Common myeloid progenitor, CD34-positive (primary cell): ENCODE measurements at regions of chr14 and their contacts with region 1.

Region 1: DNA sequence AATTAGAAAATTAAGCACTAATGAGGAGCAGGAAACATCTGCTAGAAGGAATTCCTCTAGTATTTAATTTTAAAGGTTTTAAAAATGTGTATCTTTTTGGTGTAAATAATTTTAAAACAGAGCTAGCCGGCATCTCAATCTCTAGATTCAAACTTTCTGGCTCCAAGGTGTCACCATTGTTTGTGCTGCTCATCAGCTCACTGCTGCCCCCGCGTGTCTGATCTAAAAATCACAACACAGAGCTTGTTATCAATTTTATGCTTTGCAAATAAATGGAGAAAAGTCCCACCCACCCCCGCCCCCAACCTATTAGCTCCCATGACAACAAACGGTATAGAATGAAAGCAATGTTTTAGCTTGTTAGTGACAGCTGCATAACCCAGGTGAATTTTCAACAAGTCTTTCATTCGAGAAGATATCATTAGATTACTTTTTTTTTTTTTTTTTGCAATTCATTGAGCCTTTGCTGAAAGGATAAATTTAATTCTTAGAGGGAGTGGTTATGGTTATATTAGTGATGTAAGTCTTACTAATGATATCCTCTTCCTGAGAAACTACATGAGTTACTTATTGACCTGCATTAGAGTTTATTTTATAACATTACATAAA is 11.3 kb upstream of the ABHD12B start:
- DNase-seq: peak; percentile 91 to 93 (median 92)
- H3K4me3 ChIP-seq: peak overlapping the region in 6 of 7 experiments; percentile 65 to 92 (median 79)
- H3K27ac ChIP-seq: peak overlapping the region; percentile 13 to 66
- H3K4me1 ChIP-seq: peaks cover 4 to 32% (median 32%) of the 10 kb centered on the region in 4 experiments
- H3K27me3 ChIP-seq: no peaks in the 10 kb centered on the region

Region 2: GRCh38 chr14:50773632-50774541 is 86.7 kb before region 1 on chr14:
- CTCF ChIA-PET with region 1: interaction called, 131 read pairs
- POLR2A ChIA-PET with region 1: interaction called, 3 read pairs
- DNase-seq: peak in 2 of 3 donors; percentile 22 to 33
- H3K4me3 ChIP-seq: no peak overlapping the region
- H3K27ac ChIP-seq: no peak overlapping the region
- H3K4me1 ChIP-seq: peaks cover 1 to 11% (median 6%) of the 10 kb centered on the region in 4 experiments
- H3K27me3 ChIP-seq: no peaks in the 10 kb centered on the region

Region 3: DNA sequence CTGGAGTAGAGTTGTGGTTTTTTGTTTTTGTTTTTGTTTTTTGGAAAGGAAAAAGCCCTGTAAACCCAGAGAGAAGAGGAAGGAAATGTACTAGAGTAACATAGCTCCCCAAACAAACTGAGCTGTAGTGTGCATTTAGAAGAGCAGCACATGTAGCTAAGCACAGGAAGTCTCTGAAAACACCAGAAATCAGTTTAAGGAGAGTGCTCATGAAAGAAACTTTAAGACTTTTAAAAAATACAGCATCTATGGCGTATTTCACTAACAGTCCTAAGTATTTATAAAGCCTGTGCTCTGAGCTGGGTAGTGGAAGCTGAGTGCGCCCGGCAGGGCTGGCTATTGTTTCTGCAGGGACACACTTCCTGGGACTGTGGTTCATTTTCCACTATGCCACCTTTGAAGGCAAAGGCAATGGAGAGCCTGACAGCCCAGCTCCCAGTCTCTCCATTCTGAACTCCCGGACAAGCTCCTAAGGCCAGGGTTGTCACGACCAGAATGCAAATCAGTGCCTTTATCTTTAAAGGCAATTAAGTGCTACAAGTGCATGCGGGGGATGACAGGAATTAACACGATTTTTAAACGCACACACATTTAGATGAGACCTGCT is 75.0 kb before region 1 on chr14:
- CTCF ChIA-PET with region 1: interaction called, 54 read pairs
- POLR2A ChIA-PET with region 1: interaction called, 3 read pairs
- DNase-seq: peak in 2 of 3 donors; percentile 30 to 43
- H3K4me3 ChIP-seq: peak overlapping the region in 4 of 7 experiments; percentile 26 to 37 (median 34)
- H3K27ac ChIP-seq: no peak overlapping the region
- H3K4me1 ChIP-seq: peaks cover 17 to 40% (median 24%) of the 10 kb centered on the region in 4 experiments
- H3K27me3 ChIP-seq: no peaks in the 10 kb centered on the region

Region 4: GRCh38 chr14:50792051-50792477 is 68.5 kb before region 1 on chr14:
- CTCF ChIA-PET with region 1: interaction called, 54 read pairs
- POLR2A ChIA-PET with region 1: interaction called, 3 read pairs
- DNase-seq: peak in 1 of 3 donors; percentile 25
- H3K4me3 ChIP-seq: no peak overlapping the region
- H3K27ac ChIP-seq: no peak overlapping the region
- H3K4me1 ChIP-seq: peaks cover 0 to 9% (median 6%) of the 10 kb centered on the region in 4 experiments
- H3K27me3 ChIP-seq: no peaks in the 10 kb centered on the region

Region 5: GRCh38 chr14:50812856-50813543 is 47.6 kb before region 1 on chr14:
- CTCF ChIA-PET with region 1: interaction called, 24 read pairs
- POLR2A ChIA-PET with region 1: no interaction called
- DNase-seq: peak in 1 of 3 donors; percentile 31
- H3K4me3 ChIP-seq: peak overlapping the region in 6 of 7 experiments; percentile 17 to 63 (median 48)
- H3K27ac ChIP-seq: peak overlapping the region in 1 of 2 experiments; percentile 62
- H3K4me1 ChIP-seq: peaks cover 15 to 32% (median 20%) of the 10 kb centered on the region in 4 experiments
- H3K27me3 ChIP-seq: no peaks in the 10 kb centered on the region

Region 6: DNA sequence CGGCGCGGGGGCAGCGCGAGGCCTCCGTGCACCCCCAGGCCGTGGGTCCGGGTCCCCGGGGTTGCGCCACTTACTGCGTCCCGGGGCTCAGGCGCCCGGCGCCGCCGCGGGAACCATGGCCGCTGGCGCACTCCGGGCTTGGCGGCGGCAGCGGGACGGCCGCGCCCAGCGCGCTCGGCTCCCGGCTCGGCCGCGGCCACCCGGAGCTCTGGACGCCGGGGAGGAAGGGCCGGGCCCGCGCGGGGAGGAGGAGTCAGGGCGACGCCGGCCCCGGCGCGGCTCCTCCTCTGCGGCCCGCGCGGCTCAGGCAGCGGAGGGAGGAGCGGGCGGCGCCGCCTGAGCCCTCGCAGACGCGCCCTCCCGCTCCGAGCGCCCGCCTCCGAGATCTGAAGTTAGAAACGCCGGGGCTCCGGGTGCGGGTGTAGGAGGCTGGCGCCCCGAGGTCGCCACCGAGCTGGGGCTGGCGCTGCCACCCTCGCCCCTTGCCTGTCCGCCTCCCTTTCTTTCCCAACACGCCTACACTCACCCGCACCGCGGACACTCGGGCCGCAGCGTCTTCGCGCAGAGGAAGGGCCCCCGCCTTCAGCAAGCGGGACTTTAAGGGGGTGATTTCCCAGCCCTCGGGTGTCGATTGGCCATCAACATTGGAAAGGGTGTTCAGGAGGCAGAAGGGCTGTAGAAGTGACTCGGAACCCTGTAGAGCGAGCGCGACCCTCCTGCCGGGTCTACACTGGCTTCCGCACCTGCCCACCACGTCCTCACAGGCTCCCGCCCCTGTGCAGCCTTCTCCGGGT is 29.5 kb before region 1 on chr14 and contains the start of gene NIN:
- CTCF ChIA-PET with region 1: interaction called, 76 read pairs
- POLR2A ChIA-PET with region 1: interaction called, 37 read pairs
- DNase-seq: peak; percentile 78 to 89 (median 83)
- H3K4me3 ChIP-seq: peak within 1 kb of the TSS; percentile 64 to 97 (median 91)
- H3K27ac ChIP-seq: peak within 1 kb of the TSS; percentile 64 to 80
- H3K4me1 ChIP-seq: peaks cover 23 to 59% (median 37%) of the 10 kb centered on the region in 4 experiments
- H3K27me3 ChIP-seq: no peaks in the 10 kb centered on the region

Region 7: GRCh38 chr14:50871914-50872732 is 11.5 kb after region 1 on chr14 and contains the start of gene ABHD12B:
- CTCF ChIA-PET with region 1: interaction called, 11 read pairs
- POLR2A ChIA-PET with region 1: interaction called, 3 read pairs
- DNase-seq: peak in 1 of 3 donors; percentile 42
- H3K4me3 ChIP-seq: peak within 1 kb of the TSS in 5 of 7 experiments; percentile 15 to 70 (median 50)
- H3K27ac ChIP-seq: no peak within 1 kb of the TSS
- H3K4me1 ChIP-seq: peaks cover 7 to 23% (median 20%) of the 10 kb centered on the region in 4 experiments
- H3K27me3 ChIP-seq: peaks cover 0 to 23% (median 4%) of the 10 kb centered on the region in 5 experiments

Region 8: GRCh38 chr14:50887476-50887875 is 26.9 kb after region 1 on chr14:
- CTCF ChIA-PET with region 1: no interaction called
- POLR2A ChIA-PET with region 1: no interaction called
- DNase-seq: no peak
- H3K4me3 ChIP-seq: no peak overlapping the region
- H3K27ac ChIP-seq: no peak overlapping the region
- H3K4me1 ChIP-seq: no peaks in the 10 kb centered on the region
- H3K27me3 ChIP-seq: no peaks in the 10 kb centered on the region